ENCODE measurements at regions of chr2 and their contacts with region 1.

Region 1: GRCh38 chr2:95076784-95077529 is 44.7 kb downstream of the MRPS5 start:
- DNase-seq: peak; percentile 63
- ATAC-seq: peak; percentile 91
- H3K4me3 Mint-ChIP-seq: peak overlapping the region; percentile 69
- H3K27ac Mint-ChIP-seq: no peak overlapping the region
- H3K4me1 Mint-ChIP-seq: peaks cover 10% of the 10 kb centered on the region
- H3K27me3 Mint-ChIP-seq: peaks cover 20% of the 10 kb centered on the region
- CTCF ChIP-seq: no peak

Region 2: DNA sequence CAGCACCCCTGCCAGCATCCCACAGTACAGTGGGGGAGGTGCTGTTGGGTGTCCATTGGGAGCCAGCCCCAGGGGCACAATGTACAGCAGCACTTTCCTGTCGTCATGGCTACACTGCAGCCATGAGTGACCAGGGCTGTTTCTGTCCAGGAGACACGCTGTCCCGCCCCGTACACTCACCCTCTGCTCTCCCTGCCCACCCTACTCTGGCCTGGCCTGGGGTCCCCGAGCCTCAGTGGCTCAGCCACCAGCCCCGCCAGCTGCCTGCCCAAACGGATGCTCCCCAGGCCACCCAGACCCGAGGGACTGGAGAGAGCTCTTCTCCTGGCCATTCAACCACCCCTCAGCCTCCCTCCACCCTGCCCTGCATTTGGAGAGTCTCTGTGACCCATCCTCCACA is 196.4 kb before region 1 on chr2:
- CTCF ChIA-PET with region 1: no interaction called
- POLR2A ChIA-PET with region 1: no interaction called
- intact Hi-C with region 1: no loop called
- DNase-seq: no peak
- ATAC-seq: no peak
- H3K4me3 Mint-ChIP-seq: no peak overlapping the region
- H3K27ac Mint-ChIP-seq: no peak overlapping the region
- H3K4me1 Mint-ChIP-seq: no peaks in the 10 kb centered on the region
- H3K27me3 Mint-ChIP-seq: no peaks in the 10 kb centered on the region
- CTCF ChIP-seq: no peak

Region 3: DNA sequence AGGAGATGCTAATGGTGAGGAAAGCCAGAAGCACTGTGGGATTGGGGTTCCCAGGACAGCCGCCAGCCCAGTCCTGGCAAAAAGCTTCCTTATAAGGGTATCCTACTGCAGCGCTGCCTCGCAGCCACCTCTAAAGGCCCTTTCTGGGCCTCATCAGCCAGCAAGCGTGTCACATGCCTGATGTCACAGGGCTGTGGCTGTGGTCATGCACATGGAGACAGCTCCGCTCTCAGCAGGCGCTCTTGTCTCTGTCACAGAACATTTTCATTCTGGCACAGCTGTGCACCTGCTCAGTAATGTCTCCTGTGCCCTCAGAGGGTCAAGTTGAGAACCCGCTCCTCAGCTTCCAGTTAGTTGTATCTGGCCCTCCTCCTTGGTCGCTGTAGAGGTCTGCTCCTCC is 69.1 kb before region 1 on chr2:
- CTCF ChIA-PET with region 1: no interaction called
- POLR2A ChIA-PET with region 1: no interaction called
- intact Hi-C with region 1: no loop called
- DNase-seq: no peak
- ATAC-seq: no peak
- H3K4me3 Mint-ChIP-seq: no peak overlapping the region
- H3K27ac Mint-ChIP-seq: no peak overlapping the region
- H3K4me1 Mint-ChIP-seq: no peaks in the 10 kb centered on the region
- H3K27me3 Mint-ChIP-seq: peaks cover 5% of the 10 kb centered on the region
- CTCF ChIP-seq: no peak

Region 4: GRCh38 chr2:95022309-95023221 is 54.4 kb before region 1 on chr2:
- CTCF ChIA-PET with region 1: no interaction called
- POLR2A ChIA-PET with region 1: no interaction called
- intact Hi-C with region 1: loop called (anchors 1 kb)
- DNase-seq: no peak
- ATAC-seq: peak; percentile 54
- H3K4me3 Mint-ChIP-seq: no peak overlapping the region
- H3K27ac Mint-ChIP-seq: no peak overlapping the region
- H3K4me1 Mint-ChIP-seq: peaks cover 10% of the 10 kb centered on the region
- H3K27me3 Mint-ChIP-seq: peaks cover 50% of the 10 kb centered on the region
- CTCF ChIP-seq: no peak

Region 5: DNA sequence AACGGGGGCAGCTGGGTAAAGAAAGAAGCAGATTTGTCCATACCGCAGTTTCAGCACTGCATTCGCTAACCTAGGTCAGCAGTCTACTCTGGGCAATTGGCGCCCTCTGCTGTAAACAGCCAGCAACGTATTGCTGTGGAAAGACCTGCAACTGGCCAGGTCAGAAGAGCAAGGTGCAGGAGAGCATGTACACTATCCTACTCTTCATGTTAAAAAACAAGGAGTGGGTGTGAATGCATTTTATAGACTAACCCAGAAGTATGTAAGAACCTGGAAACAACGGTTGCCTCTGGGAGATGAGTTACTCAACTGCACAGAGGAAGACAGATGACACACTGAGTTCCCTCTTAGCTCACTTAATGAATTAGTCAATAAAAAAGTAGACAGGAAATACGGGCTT is 38.5 kb after region 1 on chr2:
- CTCF ChIA-PET with region 1: interaction called, 11 read pairs
- POLR2A ChIA-PET with region 1: no interaction called
- intact Hi-C with region 1: loop called (anchors 1 kb)
- DNase-seq: peak; percentile 21
- ATAC-seq: peak; percentile 92
- H3K4me3 Mint-ChIP-seq: no peak overlapping the region
- H3K27ac Mint-ChIP-seq: no peak overlapping the region
- H3K4me1 Mint-ChIP-seq: peaks cover 34% of the 10 kb centered on the region
- H3K27me3 Mint-ChIP-seq: no peaks in the 10 kb centered on the region
- CTCF ChIP-seq: peak; percentile 57

Region 6: DNA sequence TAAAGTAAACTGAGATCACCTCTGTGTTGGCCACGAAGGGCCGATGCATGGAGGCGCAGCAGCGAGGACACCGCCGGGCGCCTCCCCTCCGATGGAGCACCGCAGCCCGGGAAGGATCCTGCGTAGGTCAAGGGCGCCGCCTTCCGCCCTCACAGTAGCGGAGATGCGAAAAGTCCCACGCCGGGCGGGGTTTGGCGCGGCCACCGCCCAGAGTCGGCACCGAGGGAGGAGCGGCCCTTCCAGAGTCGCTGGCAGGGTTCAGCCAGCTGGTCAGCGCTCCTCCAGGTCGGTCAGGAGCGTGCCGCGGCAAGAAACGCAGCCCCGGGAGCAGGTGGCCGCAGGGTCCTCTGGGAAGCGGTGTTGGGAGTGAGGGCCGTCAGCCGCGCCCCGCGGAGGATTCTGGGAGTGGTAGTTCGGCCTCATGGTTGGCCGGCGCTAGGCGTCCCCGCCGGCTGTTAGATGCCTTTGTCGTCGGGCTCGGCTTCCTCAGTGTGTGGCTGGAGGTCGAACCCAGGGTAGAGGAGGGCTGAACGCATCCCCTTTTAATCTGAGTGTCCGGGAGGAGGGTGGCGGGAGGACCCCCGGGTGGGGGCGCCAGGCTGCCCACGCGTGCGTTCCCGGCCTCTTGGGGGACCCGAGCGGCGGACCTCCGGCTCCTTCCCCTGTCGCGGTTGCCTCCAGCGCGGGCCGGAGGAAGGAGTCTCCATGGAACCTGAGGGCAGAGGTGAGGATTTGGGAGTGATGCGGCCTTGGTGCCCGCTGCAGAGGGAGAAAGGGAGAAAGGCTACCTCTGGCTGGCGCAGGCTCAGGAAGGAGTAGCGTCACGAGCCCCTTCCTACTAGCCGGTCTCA is 130.4 kb after region 1 on chr2 and contains the start of gene ZNF892:
- CTCF ChIA-PET with region 1: no interaction called
- POLR2A ChIA-PET with region 1: no interaction called
- intact Hi-C with region 1: loop called (anchors 1 kb)
- DNase-seq: peak; percentile 81
- ATAC-seq: peak; percentile 97
- H3K4me3 Mint-ChIP-seq: peak within 1 kb of the TSS; percentile 94
- H3K27ac Mint-ChIP-seq: peak within 1 kb of the TSS; percentile 79
- H3K4me1 Mint-ChIP-seq: peaks cover 16% of the 10 kb centered on the region
- H3K27me3 Mint-ChIP-seq: no peaks in the 10 kb centered on the region
- CTCF ChIP-seq: no peak
- total RNA-seq, gene ZNF892: 4.0 and 4.3 TPM in 2 replicates